ENCODE measurements at regions of chr19 and their contacts with region 1.

Region 1: DNA sequence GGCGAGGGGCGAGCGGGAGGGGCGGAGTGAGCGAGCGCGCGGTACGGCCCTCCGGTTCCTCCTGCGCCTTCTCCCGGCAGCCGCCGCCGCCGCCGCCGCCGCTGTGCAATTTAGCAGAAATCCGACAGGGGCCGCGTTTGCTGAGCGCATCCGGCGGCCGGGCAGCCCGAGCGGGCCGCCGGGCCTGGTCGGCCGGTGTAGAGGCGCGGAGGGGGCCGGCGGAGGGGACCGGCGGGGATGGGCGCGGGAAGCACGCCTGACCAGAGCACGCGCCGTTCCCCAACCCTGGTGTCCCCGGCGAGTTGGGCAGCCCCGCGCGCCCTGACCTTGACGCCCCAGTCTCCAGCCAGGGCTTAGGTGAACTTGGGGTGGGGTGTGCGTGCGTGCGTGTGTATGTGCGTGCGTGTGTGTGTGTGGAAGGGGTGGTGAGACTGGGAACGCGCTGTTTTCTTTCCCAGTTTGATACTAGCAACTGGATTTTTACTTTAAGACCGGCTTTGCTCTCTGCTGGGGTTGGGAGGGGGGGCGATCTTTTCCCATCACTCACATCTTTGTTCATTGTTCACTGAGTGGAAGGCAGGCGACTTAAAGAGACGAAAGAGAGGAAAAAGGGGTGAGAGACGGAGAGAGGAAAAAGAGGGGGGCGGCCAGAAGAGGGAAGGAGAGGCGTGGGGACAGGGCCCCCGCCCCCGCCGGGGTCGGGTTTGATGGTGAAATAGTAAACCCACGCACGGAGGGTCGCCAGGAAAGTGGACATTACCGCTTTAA is 144.3 kb upstream of the ZNF536 start:
- DNase-seq: no peak
- H3K4me3 ChIP-seq: peak overlapping the region; percentile 60 to 76 (median 68)
- H3K27ac ChIP-seq: peak overlapping the region; percentile 26 to 63 (median 53)
- H3K4me1 ChIP-seq: peaks cover 32 to 50% (median 44%) of the 10 kb centered on the region in 4 donors
- H3K27me3 ChIP-seq: peaks cover 4 to 97% (median 36%) of the 10 kb centered on the region in 4 donors
- CTCF ChIP-seq: peak in 2 of 3 experiments; percentile 53 to 74
- EP300 ChIP-seq: no peak
- POLR2A ChIP-seq: no peak

Region 2: GRCh38 chr19:29564574-29565005 is 663.3 kb before region 1 on chr19:
- intact Hi-C with region 1: no loop called
- DNase-seq: no peak
- H3K4me3 ChIP-seq: no peak overlapping the region
- H3K27ac ChIP-seq: no peak overlapping the region
- H3K4me1 ChIP-seq: no peaks in the 10 kb centered on the region
- H3K27me3 ChIP-seq: peaks cover 0 to 74% (median 0%) of the 10 kb centered on the region in 4 donors
- CTCF ChIP-seq: no peak
- EP300 ChIP-seq: no peak
- POLR2A ChIP-seq: no peak

Region 3: DNA sequence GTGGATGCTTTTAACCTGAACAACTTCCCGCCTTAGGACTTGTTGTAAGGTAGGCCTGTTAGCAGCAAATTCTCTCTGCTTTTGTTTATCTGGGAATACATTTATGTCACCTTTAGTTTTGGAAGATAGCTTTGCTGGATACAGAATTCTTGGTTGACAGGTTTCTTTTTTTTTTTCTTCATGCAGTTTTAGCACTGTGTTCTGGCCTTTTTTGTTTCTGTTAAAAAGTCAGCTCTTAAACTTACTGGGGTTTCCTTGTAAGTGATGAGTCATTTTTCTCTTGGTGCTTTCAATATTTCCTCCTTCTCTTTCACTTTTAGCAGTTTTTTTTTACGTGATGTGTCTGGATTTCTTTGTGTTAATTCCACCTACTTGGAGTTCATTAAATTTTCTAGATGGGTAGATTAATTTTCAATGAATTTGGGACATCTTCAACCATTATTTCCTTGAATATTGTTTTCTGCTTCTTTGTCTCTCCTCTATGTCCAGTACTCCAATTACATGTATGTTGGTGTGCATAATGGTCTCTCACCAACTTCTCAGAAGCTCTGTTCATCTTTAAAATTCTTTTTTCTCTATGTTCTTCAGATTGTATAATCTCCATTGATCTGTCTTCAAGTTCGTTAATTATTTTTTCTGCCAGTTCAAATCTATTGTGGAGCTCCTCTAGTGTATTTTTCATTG is 43.9 kb before region 1 on chr19:
- intact Hi-C with region 1: no loop called
- DNase-seq: no peak
- H3K4me3 ChIP-seq: no peak overlapping the region
- H3K27ac ChIP-seq: no peak overlapping the region
- H3K4me1 ChIP-seq: no peaks in the 10 kb centered on the region
- H3K27me3 ChIP-seq: no peaks in the 10 kb centered on the region
- CTCF ChIP-seq: no peak
- EP300 ChIP-seq: no peak
- POLR2A ChIP-seq: no peak

Region 4: GRCh38 chr19:30649934-30650614 is 422.2 kb after region 1 on chr19:
- intact Hi-C with region 1: loop called (anchors 10 kb)
- DNase-seq: no peak
- H3K4me3 ChIP-seq: no peak overlapping the region
- H3K27ac ChIP-seq: no peak overlapping the region
- H3K4me1 ChIP-seq: peaks cover 0 to 4% (median 0%) of the 10 kb centered on the region in 4 donors
- H3K27me3 ChIP-seq: peaks cover 0 to 66% (median 0%) of the 10 kb centered on the region in 4 donors
- CTCF ChIP-seq: peak; percentile 46 to 72 (median 59)
- EP300 ChIP-seq: no peak
- POLR2A ChIP-seq: no peak

Measured in esophagus muscularis mucosa (tissue), 4 donors.